ENCODE measurements at regions of chr10 and their contacts with region 1.

Region 1: DNA sequence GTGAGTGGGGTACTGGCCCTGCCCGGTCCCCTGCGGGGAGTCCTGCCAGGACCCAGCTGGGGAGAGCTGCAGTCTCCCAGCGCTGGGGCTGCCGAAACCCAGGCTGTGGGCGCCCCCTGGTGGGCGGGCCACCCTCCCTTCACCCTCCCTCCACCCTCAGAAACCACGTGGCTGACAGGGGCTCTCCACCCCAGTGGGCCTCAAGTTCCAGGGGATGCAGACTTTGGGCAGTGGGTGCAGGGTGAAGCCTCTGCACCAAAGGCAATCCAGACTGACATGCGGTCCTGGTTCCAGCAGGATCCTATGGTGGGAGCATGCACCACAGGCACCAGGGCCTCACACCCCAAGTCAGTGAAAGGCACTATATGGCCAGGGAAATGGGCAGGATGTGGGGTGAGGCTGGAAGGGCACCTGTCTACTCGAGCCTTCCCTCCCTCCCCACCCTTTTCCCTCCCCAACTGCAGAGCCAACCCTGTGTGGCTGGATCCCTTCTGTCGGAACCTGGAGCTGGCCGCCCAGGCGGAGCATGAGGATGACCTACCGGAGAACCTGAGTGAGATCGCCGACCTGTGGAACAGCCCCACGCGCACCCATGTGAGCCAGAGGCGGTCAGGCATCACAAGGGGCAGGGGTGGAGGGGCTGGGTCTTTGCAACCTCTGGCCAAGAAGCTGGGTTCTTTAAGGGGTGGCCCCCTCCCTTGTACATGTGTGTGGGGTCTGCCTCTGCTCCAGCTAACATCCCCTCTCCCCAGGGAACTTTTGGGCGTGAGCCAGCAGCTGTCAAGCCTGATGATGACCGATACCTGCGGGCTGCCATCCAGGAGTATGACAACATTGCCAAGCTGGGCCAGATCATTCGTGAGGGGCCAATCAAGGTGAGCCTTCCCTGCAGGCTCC is 38.8 kb downstream of the PSAP start:
- DNase-seq: no peak
- H3K4me3 ChIP-seq: no peak overlapping the region
- H3K27ac ChIP-seq: no peak overlapping the region
- H3K27me3 ChIP-seq: peaks cover 5% of the 10 kb centered on the region
- CTCF ChIP-seq: peak; percentile 86

Region 2: DNA sequence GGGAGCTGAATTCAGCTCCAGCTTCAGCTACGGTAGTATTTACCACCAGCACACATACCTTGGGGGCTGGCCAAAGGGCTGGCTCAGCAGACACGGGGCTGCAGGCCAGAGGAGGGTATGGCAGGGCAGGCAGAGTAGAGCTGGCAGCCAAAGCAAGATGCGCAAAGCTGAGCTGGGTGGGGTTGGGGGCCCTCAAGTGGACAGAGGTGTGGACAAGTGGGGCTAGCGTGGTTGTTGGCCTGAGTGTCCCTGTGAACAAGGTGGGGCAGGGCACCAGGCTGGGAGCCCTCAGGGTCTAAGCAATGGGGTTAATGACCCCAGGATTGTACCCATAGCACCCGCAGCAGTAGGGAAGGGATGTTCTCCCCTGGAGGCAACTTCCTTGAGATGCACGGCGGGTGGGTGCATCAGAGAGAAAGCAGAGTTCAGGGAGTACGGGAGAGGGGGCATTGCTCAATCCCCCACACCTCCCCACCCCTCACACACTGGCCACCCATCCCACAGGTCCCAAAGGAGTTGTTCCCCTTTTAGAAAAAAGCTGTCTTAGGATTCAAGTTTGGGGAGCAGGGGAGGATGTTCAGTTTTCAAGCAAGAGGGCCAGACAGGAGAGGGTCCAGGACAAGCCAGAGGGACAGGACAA is 46.9 kb before region 1 on chr10:
- CTCF ChIA-PET with region 1: no interaction called
- POLR2A ChIA-PET with region 1: interaction called, 15 read pairs
- DNase-seq: no peak
- H3K4me3 ChIP-seq: no peak overlapping the region
- H3K27ac ChIP-seq: no peak overlapping the region
- H3K27me3 ChIP-seq: no peaks in the 10 kb centered on the region
- CTCF ChIP-seq: no peak

Region 3: DNA sequence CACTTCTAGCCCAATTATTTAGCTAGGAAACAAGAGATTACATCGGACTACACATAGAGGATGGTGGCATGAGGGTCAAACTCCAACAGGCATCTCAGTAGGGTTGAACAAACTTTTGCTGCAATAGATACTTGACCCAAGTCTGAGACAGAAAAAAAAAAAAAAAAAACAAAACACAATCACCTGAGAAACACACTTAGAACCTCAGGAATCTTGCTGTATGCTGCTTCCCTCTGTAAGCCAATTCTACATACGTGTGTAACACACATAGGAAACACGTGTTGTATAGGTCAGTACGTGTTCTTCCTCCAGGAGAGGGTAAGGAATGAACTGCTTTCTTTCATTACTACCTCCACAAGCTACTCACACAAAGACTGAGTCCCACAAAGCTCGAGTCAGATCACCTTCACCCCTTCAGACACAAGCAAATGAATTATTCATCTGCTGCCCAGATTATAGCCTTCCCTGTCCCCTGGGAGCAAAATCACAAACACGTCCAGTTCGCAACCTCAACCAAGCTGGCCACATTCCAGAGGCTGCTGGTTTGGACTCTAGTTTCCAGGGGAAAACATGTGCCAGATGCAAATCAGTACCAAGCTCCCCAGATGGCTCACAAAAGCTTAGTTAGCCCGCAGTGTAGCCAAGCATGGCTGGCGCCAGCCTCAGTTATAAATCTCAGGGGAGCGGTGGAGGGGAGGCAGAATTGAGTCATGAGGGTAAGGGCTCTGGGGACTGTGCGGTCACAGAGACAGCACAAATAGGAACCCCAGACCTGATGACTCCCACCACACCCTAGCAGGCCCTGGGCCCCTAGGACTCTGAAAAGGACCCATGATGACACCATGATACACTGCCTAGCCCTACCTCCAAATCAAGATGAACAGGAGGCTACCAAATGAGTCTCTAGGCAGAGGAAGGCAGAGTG is 23.7 kb after region 1 on chr10:
- CTCF ChIA-PET with region 1: no interaction called
- POLR2A ChIA-PET with region 1: no interaction called
- DNase-seq: no peak
- H3K4me3 ChIP-seq: no peak overlapping the region
- H3K27ac ChIP-seq: no peak overlapping the region
- H3K27me3 ChIP-seq: no peaks in the 10 kb centered on the region
- CTCF ChIP-seq: no peak